ENCODE measurements at regions of chr21 and their contacts with region 1.

Region 1: GRCh38 chr21:23394458-23394857 is 2212.8 kb downstream of the MRPL39 start:
- DNase-seq: no peak
- H3K4me3 ChIP-seq: no peak overlapping the region
- H3K27ac ChIP-seq: no peak overlapping the region
- H3K4me1 ChIP-seq: no peaks in the 10 kb centered on the region
- H3K27me3 ChIP-seq: no peaks in the 10 kb centered on the region
- CTCF ChIP-seq: no peak
- POLR2A ChIP-seq: no peak

Region 2: GRCh38 chr21:23445307-23445706 is 50.8 kb after region 1 on chr21:
- intact Hi-C with region 1: loop called (anchors 2 kb)
- DNase-seq: no peak
- H3K4me3 ChIP-seq: no peak overlapping the region
- H3K27ac ChIP-seq: no peak overlapping the region
- H3K4me1 ChIP-seq: no peaks in the 10 kb centered on the region
- H3K27me3 ChIP-seq: no peaks in the 10 kb centered on the region
- CTCF ChIP-seq: no peak
- POLR2A ChIP-seq: no peak

Measured in breast epithelium (tissue), 4 donors.